ENCODE measurements at regions of chr11 and their contacts with region 1.

Region 1: DNA sequence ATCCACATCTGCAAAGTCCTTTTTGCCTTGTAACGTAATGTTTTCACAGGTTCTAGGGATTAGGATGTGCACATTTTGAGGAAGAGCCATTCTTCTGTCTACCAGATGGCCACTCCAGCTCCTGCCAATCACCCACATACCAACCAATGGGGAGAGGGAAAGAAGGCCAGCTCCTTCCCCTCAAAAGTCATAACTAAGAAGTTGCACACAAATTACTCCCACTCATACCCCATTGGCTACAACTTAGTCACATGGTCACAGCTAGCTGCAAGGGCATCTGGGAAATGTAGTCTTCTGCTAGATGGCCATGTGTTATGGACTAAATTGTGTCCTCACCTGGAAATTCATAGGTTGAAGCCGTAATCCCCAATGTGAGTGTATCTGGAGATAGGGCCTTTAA is 15.4 kb upstream of the MYOD1 start:
- DNase-seq: no peak
- ATAC-seq: peak in 1 of 2 donors; percentile 9
- H3K4me3 ChIP-seq: no peak overlapping the region
- H3K27ac ChIP-seq: no peak overlapping the region
- H3K4me1 ChIP-seq: peaks cover 23 to 31% of the 10 kb centered on the region in 2 donors
- H3K27me3 ChIP-seq: no peaks in the 10 kb centered on the region
- CTCF ChIP-seq: no peak
- POLR2A ChIP-seq: no peak

Region 2: DNA sequence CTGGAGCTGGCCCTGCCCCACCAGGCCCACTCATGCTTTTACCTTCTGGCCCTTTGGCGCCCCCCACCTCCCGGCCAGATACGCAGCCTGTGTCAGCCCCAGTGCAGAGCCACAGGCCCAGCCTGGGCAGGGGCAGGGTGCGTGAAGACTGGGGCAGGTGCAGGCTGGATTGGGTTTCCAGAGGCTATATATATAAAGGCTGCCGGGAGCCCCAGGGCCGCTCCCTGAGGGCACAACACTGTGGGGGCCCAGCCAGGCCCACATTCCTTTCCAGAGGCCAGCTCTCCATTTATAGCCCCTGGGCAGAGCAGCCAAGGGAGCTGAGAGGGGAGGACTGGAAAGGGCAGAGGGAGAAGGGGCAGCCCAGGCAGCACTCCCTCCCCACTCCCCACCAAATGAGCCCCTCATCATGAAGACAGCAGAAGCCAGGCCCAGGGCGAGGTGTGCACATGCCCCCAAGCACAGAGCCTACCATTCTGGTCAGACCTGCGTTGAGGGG is 10.5 kb after region 1 on chr11:
- in situ Hi-C with region 1: no loop called
- intact Hi-C with region 1: loop called (anchors 1 kb)
- DNase-seq: peak; percentile 88 to 97
- ATAC-seq: peak; percentile 61 to 74
- H3K4me3 ChIP-seq: peak overlapping the region in 3 of 4 donors; percentile 0 to 43 (median 28)
- H3K27ac ChIP-seq: peak overlapping the region; percentile 91 to 99 (median 95)
- H3K4me1 ChIP-seq: peaks cover 40 to 43% of the 10 kb centered on the region in 2 donors
- H3K27me3 ChIP-seq: no peaks in the 10 kb centered on the region
- CTCF ChIP-seq: peak in 4 of 5 experiments; percentile 29 to 59 (median 36)
- POLR2A ChIP-seq: peak; percentile 54 to 86